B cell (primary cell): ENCODE measurements at regions of chr2 and their contacts with region 1.

Region 1: GRCh38 chr2:165953655-165954606 is at the start of gene TTC21B:
- DNase-seq: peak; percentile 93
- ATAC-seq: peak; percentile 96
- H3K4me3 ChIP-seq: peak within 1 kb of the TSS; percentile 62 to 82 (median 71)
- H3K4me3 Mint-ChIP-seq: peak within 1 kb of the TSS; percentile 53
- H3K27ac ChIP-seq: peak within 1 kb of the TSS; percentile 77
- H3K27ac Mint-ChIP-seq: no peak within 1 kb of the TSS
- H3K4me1 ChIP-seq: peaks cover 19 to 23% of the 10 kb centered on the region in 2 donors
- H3K4me1 Mint-ChIP-seq: peaks cover 12% of the 10 kb centered on the region
- H3K27me3 ChIP-seq: no peaks in the 10 kb centered on the region
- H3K27me3 Mint-ChIP-seq: no peaks in the 10 kb centered on the region
- CTCF ChIP-seq: peak; percentile 90
- total RNA-seq, gene TTC21B: 41.5 and 50.7 TPM in 2 replicates

Region 2: GRCh38 chr2:165401285-165401852 is 552.6 kb before region 1 on chr2:
- CTCF ChIA-PET with region 1: interaction called, 3 read pairs
- POLR2A ChIA-PET with region 1: no interaction called
- intact Hi-C with region 1: loop called (anchors 2 kb)
- DNase-seq: peak; percentile 75
- ATAC-seq: no peak
- H3K4me3 ChIP-seq: no peak overlapping the region
- H3K4me3 Mint-ChIP-seq: no peak overlapping the region
- H3K27ac ChIP-seq: no peak overlapping the region
- H3K27ac Mint-ChIP-seq: no peak overlapping the region
- H3K4me1 ChIP-seq: no peaks in the 10 kb centered on the region
- H3K4me1 Mint-ChIP-seq: no peaks in the 10 kb centered on the region
- H3K27me3 ChIP-seq: no peaks in the 10 kb centered on the region
- H3K27me3 Mint-ChIP-seq: peaks cover 3% of the 10 kb centered on the region
- CTCF ChIP-seq: peak; percentile 83

Region 3: DNA sequence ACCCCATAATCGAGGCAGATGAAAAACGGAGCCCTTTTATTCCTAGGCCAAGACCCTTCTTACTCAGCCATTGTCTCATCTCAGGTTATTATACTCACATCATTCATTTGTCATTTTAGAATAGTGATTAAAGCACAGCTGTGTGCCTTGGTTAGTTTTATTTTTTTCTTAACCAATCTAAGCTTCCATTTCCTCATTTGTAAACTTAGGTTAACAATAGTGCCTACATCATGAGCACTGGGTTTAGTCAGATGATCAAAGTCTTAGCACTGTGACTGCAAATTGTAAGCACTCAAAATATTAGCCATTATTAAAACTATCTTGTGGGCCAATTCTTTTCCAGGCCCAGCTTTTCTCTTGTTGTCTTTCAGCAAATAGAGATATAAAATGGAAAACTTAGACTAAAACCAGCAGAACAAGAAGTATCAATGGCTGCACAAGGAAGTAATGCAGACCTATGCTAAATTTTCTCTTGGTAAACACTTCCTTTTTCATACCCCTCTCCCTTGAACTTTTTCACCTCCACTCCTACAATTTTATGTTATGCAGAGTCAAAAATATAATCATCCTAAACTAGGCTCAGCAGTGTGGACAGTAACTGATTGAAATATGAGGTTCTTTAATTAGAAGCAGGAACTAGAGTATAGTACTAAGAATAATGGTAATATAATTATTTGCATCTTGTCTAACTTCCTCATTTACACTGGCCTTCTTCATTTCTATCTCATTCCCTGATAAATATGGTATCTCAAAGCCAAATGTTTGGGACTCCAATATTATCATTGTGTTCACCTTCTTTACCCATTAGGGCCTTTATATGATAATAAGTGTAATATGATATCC is 138.4 kb before region 1 on chr2:
- CTCF ChIA-PET with region 1: no interaction called
- POLR2A ChIA-PET with region 1: no interaction called
- intact Hi-C with region 1: loop called (anchors 5 kb)
- DNase-seq: peak; percentile 71
- ATAC-seq: peak; percentile 78
- H3K4me3 ChIP-seq: peak overlapping the region in 1 of 5 experiments; percentile 48
- H3K4me3 Mint-ChIP-seq: peak overlapping the region; percentile 71
- H3K27ac ChIP-seq: peak overlapping the region; percentile 79 to 81
- H3K27ac Mint-ChIP-seq: peak overlapping the region; percentile 86
- H3K4me1 ChIP-seq: peaks cover 59 to 60% of the 10 kb centered on the region in 2 donors
- H3K4me1 Mint-ChIP-seq: peaks cover 54% of the 10 kb centered on the region
- H3K27me3 ChIP-seq: no peaks in the 10 kb centered on the region
- H3K27me3 Mint-ChIP-seq: no peaks in the 10 kb centered on the region
- CTCF ChIP-seq: no peak

Region 4: DNA sequence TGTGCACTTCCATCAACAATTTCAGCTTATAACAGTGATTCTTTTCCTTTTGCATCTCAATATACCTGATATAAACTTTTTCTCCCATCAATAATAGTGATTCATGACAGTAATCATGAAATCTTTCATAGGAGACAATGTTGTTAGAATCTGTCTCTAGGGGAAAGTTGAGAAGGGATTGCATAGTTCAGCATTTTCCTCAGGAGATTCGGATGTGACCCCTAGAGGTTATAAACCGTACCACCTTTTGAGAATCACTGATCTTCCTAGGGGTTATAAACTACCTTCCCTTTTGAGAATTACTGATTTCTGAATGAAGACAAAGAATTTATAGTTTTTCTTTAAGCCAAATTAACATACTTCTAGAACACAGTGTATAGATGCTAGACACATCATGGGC is 106.9 kb before region 1 on chr2:
- CTCF ChIA-PET with region 1: no interaction called
- POLR2A ChIA-PET with region 1: no interaction called
- intact Hi-C with region 1: no loop called
- DNase-seq: peak; percentile 18
- ATAC-seq: no peak
- H3K4me3 ChIP-seq: no peak overlapping the region
- H3K4me3 Mint-ChIP-seq: no peak overlapping the region
- H3K27ac ChIP-seq: no peak overlapping the region
- H3K27ac Mint-ChIP-seq: no peak overlapping the region
- H3K4me1 ChIP-seq: no peaks in the 10 kb centered on the region
- H3K4me1 Mint-ChIP-seq: no peaks in the 10 kb centered on the region
- H3K27me3 ChIP-seq: no peaks in the 10 kb centered on the region
- H3K27me3 Mint-ChIP-seq: no peaks in the 10 kb centered on the region
- CTCF ChIP-seq: peak; percentile 18